Activated B cell treated with CpG ODN at 0.5 μM for 24 hours (primary cell): ENCODE measurements at regions of chr6 and their contacts with region 1.

Region 1: GRCh38 chr6:53651764-53652401 is 13.7 kb downstream of the KLHL31 start:
- DNase-seq: peak; percentile 63
- ATAC-seq: peak; percentile 88
- H3K4me3 Mint-ChIP-seq: peak overlapping the region; percentile 87
- H3K27ac Mint-ChIP-seq: peak overlapping the region; percentile 68
- H3K4me1 Mint-ChIP-seq: peaks cover 20% of the 10 kb centered on the region
- H3K27me3 Mint-ChIP-seq: peaks cover 4% of the 10 kb centered on the region
- CTCF ChIP-seq: no peak

Region 2: GRCh38 chr6:53064726-53065215 is 587.1 kb before region 1 on chr6:
- CTCF ChIA-PET with region 1: no interaction called
- POLR2A ChIA-PET with region 1: no interaction called
- intact Hi-C with region 1: loop called (anchors 1 kb)
- DNase-seq: peak; percentile 82
- ATAC-seq: peak; percentile 81
- H3K4me3 Mint-ChIP-seq: peak overlapping the region; percentile 100
- H3K27ac Mint-ChIP-seq: peak overlapping the region; percentile 99
- H3K4me1 Mint-ChIP-seq: peaks cover 57% of the 10 kb centered on the region
- H3K27me3 Mint-ChIP-seq: no peaks in the 10 kb centered on the region
- CTCF ChIP-seq: no peak

Region 3: GRCh38 chr6:53294095-53294494 is 357.8 kb before region 1 on chr6:
- CTCF ChIA-PET with region 1: no interaction called
- POLR2A ChIA-PET with region 1: no interaction called
- intact Hi-C with region 1: loop called (anchors 5 kb)
- DNase-seq: no peak
- ATAC-seq: peak; percentile 62
- H3K4me3 Mint-ChIP-seq: no peak overlapping the region
- H3K27ac Mint-ChIP-seq: peak overlapping the region; percentile 80
- H3K4me1 Mint-ChIP-seq: peaks cover 89% of the 10 kb centered on the region
- H3K27me3 Mint-ChIP-seq: no peaks in the 10 kb centered on the region
- CTCF ChIP-seq: peak; percentile 26

Region 4: GRCh38 chr6:53544470-53545308 is 107.2 kb before region 1 on chr6 and contains the start of gene GCLC:
- CTCF ChIA-PET with region 1: interaction called, 11 read pairs
- POLR2A ChIA-PET with region 1: interaction called, 7 read pairs
- intact Hi-C with region 1: loop called (anchors 1 kb)
- DNase-seq: peak; percentile 87
- ATAC-seq: peak; percentile 71
- H3K4me3 Mint-ChIP-seq: peak within 1 kb of the TSS; percentile 93
- H3K27ac Mint-ChIP-seq: peak within 1 kb of the TSS; percentile 91
- H3K4me1 Mint-ChIP-seq: peaks cover 67% of the 10 kb centered on the region
- H3K27me3 Mint-ChIP-seq: no peaks in the 10 kb centered on the region
- CTCF ChIP-seq: peak; percentile 37
- total RNA-seq, gene GCLC: 26.6 and 27.1 TPM in 2 replicates

Region 5: GRCh38 chr6:53725791-53726431 is 74.0 kb after region 1 on chr6:
- CTCF ChIA-PET with region 1: interaction called, 6 read pairs
- POLR2A ChIA-PET with region 1: no interaction called
- intact Hi-C with region 1: loop called (anchors 2 kb)
- DNase-seq: peak; percentile 63
- ATAC-seq: peak; percentile 87
- H3K4me3 Mint-ChIP-seq: no peak overlapping the region
- H3K27ac Mint-ChIP-seq: no peak overlapping the region
- H3K4me1 Mint-ChIP-seq: peaks cover 5% of the 10 kb centered on the region
- H3K27me3 Mint-ChIP-seq: peaks cover 9% of the 10 kb centered on the region
- CTCF ChIP-seq: peak; percentile 97

Region 6: DNA sequence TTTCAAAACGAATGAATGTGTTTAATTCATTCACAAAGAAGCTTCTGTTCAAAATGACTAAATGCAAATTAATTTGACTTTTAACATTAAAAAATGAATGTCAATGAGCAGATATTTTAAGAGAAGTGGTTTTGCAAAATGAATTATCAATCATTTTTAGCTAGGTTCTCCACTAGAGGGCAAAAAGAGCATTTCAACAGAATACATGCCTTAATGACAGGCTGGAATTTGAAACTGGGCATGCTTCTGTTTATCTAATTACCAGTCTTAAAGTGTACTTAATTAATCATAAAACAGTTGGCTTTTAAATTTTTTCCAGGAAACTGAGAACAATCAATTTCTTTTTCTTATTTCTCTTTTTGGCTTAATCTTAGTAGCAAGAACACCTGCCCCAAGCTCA is 592.5 kb after region 1 on chr6:
- CTCF ChIA-PET with region 1: no interaction called
- POLR2A ChIA-PET with region 1: no interaction called
- intact Hi-C with region 1: no loop called
- DNase-seq: no peak
- ATAC-seq: no peak
- H3K4me3 Mint-ChIP-seq: no peak overlapping the region
- H3K27ac Mint-ChIP-seq: no peak overlapping the region
- H3K4me1 Mint-ChIP-seq: no peaks in the 10 kb centered on the region
- H3K27me3 Mint-ChIP-seq: no peaks in the 10 kb centered on the region
- CTCF ChIP-seq: no peak